SK-N-SH (cell line): ENCODE measurements at regions of chr17 and their contacts with region 1.

Region 1: GRCh38 chr17:60599620-60600489 is at the start of gene PPM1D:
- DNase-seq: peak; percentile 100
- H3K4me3 ChIP-seq: peak within 1 kb of the TSS; percentile 78 to 97
- H3K27ac ChIP-seq: peak within 1 kb of the TSS; percentile 92 to 94
- H3K4me1 ChIP-seq: peaks cover 3 to 11% of the 10 kb centered on the region in 2 experiments
- H3K27me3 ChIP-seq: no peaks in the 10 kb centered on the region
- CTCF ChIP-seq: no peak
- EP300 ChIP-seq: peak; percentile 7 to 46; a peak in 2 of 4 replicates
- RAD21 ChIP-seq: no peak
- polyA plus RNA-seq, gene PPM1D: 8.4 and 8.8 TPM in 2 replicates

Region 2: DNA sequence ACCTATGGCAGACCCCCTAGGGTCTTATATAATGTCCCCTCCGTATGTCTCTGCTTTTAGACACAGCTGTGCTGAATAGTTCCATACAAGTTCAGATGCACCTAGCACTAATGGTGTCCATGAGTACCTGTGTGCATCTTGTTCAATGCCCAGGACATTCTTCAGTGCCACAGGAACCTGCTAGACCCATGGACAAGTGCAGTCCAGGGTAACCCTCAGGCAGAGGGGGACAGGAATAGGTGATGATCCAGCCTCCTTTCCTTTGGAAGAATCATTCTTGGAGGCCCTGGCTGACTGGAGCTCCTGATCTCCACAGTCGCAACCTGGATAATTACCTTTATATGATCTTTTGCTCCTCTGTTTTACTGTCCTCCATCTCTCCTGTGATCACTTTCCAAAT is 28.3 kb before region 1 on chr17:
- CTCF ChIA-PET with region 1: interaction called, 14 read pairs
- POLR2A ChIA-PET with region 1: no interaction called
- DNase-seq: no peak
- H3K4me3 ChIP-seq: no peak overlapping the region
- H3K27ac ChIP-seq: peak overlapping the region in 1 of 2 experiments; percentile 93; a peak in 2 of 4 replicates
- H3K4me1 ChIP-seq: peaks cover 2 to 11% of the 10 kb centered on the region in 2 experiments; a peak in 3 of 4 replicates
- H3K27me3 ChIP-seq: no peaks in the 10 kb centered on the region
- CTCF ChIP-seq: no peak
- EP300 ChIP-seq: no peak
- RAD21 ChIP-seq: no peak

Region 3: GRCh38 chr17:60577147-60577915 is 22.5 kb before region 1 on chr17:
- CTCF ChIA-PET with region 1: interaction called, 13 read pairs
- POLR2A ChIA-PET with region 1: no interaction called
- DNase-seq: peak; percentile 33
- H3K4me3 ChIP-seq: no peak overlapping the region; a peak in 1 of 4 replicates
- H3K27ac ChIP-seq: peak overlapping the region in 1 of 2 experiments; percentile 25; a peak in 1 of 4 replicates
- H3K4me1 ChIP-seq: peaks cover 2 to 6% of the 10 kb centered on the region in 2 experiments; a peak in 2 of 4 replicates
- H3K27me3 ChIP-seq: no peaks in the 10 kb centered on the region
- CTCF ChIP-seq: peak; percentile 40
- EP300 ChIP-seq: no peak
- RAD21 ChIP-seq: peak; percentile 52